ENCODE measurements at regions of chr3 and their contacts with region 1.

Region 1: DNA sequence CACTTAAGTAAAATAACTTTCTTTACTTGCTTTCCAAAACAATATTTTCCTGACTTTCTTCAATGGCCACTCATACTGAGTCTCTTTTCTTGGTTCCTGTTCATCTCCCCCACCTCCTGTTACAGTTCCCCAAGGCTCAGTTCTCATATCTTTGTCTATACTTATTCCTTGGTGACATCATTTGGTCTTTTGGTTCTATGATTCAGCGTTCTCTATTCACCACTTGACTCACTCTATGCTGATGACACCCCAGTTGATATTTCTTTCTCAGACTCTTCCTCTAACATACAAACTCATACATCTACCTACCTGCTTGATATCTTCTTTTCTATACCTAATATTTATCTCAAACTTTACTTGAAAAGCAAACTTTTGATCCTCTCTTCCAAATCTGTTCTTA is 85.0 kb upstream of the P3H2 start:
- DNase-seq: no peak
- H3K4me3 Mint-ChIP-seq: no peak overlapping the region
- H3K27ac Mint-ChIP-seq: no peak overlapping the region
- H3K4me1 Mint-ChIP-seq: peaks cover 8% of the 10 kb centered on the region
- H3K27me3 Mint-ChIP-seq: peaks cover 14% of the 10 kb centered on the region

Region 2: DNA sequence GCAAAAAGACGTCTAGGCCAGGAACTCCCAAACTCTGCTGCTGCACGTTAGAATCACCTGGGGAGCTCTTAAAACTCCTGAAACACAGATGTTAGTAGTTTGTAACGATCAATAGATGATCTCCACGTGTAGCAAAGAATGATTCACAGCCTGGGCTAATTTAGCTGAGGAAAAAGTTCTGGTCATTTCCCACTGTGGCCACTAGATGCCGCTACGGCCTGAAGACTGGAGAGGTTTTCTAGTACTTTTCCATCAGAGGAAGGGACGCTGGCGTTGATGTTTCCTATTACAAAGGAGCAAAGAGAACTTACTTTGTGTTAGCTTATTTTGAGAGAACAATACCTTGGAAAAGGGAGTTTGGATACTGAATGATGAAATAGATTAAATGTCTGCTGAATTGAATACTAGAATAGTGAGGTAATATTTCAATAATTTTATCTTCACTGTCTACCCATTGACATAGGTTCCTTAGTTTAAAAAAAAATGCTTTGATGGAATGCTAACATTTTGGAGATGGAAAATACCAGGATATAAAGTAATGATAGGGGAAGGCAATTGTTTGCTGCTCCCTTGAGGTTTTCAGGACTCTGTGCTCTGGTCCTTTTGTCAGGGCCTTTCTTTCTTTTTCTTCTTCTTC is 244.1 kb before region 1 on chr3:
- intact Hi-C with region 1: loop called (anchors 1 kb)
- DNase-seq: peak; percentile 91
- H3K4me3 Mint-ChIP-seq: no peak overlapping the region
- H3K27ac Mint-ChIP-seq: no peak overlapping the region
- H3K4me1 Mint-ChIP-seq: peaks cover 11% of the 10 kb centered on the region
- H3K27me3 Mint-ChIP-seq: peaks cover 15% of the 10 kb centered on the region